Dorsolateral prefrontal cortex (tissue), 120 donors: ENCODE measurements at regions of chr15 and their contacts with region 1.

Region 1: DNA sequence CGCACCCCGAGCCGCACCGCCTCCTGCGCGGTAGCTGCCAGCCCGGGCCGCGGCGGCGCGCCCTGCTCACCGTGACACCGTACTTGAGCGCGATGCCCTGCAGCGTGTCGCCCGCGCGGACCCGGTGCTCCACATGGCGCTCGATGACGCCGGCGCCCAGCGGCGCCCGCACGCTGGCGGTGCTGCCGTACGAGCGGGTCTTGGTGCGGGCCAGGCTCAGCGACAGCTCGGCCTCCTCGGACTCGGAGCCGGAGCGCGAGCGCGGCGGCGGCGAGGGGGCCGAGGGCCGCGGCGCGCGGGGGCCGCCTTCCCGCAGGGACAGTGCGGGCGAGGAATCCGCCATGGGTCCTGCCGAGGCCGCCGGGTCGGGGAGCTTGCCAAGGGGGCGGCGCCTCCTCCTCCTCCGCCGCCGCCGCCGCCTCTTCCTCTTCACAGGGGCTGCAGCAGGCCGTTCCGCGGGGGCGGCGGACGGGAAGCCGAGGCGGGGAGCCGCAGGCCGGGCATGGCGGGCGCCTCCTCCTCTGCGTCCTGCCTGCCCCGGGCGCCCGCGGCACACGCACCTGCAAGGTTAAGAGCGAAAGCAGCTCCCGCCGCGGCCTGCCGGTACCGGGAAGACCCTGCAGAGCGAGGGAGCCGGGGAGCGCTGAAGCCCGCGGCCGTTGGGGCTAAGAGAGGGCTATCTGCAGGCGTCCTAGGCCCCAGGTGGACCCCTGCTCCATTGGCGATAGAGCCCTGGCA is at the start of gene LYSMD2:
- DNase-seq: peak; percentile 40 to 82 (median 63)
- H3K4me3 ChIP-seq: peak within 1 kb of the TSS; percentile 58 to 92 (median 81)
- H3K27ac ChIP-seq: peak within 1 kb of the TSS in 58 of 59 donors; percentile 77 to 99 (median 95)
- H3K27me3 ChIP-seq: no peaks in the 10 kb centered on the region
- CTCF ChIP-seq: peak in 2 of 56 donors; percentile 18 to 26
- total RNA-seq, gene LYSMD2: 9.8 to 63.1 (median 38.4) TPM

Region 2: DNA sequence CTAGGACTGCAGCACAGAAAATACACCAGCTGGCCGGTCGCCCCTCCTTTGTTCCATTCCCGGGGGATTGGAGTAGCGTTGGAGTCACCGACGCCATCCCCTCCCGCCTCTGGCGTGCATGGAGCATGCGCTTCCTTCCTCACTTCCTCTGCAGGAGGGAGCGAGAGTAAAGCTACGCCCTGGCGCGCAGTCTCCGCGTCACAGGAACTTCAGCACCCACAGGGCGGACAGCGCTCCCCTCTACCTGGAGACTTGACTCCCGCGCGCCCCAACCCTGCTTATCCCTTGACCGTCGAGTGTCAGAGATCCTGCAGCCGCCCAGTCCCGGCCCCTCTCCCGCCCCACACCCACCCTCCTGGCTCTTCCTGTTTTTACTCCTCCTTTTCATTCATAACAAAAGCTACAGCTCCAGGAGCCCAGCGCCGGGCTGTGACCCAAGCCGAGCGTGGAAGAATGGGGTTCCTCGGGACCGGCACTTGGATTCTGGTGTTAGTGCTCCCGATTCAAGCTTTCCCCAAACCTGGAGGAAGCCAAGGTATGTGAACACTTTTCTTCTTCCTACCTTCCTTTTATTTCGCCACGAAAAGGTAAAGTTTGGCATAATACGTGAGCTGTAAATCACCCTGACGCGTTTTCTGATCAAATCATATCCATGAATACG is 56.0 kb before region 1 on chr15 and contains the start of gene SCG3:
- intact Hi-C with region 1: no loop called
- DNase-seq: peak; percentile 65 to 92 (median 87)
- H3K4me3 ChIP-seq: peak within 1 kb of the TSS; percentile 13 to 75 (median 62)
- H3K27ac ChIP-seq: peak within 1 kb of the TSS in 58 of 59 donors; percentile 1 to 93 (median 82)
- H3K27me3 ChIP-seq: no peaks in the 10 kb centered on the region
- CTCF ChIP-seq: peak in 7 of 56 donors; percentile 10 to 28 (median 16)
- total RNA-seq, gene SCG3: 40.1 to 220 (median 136) TPM

Region 3: DNA sequence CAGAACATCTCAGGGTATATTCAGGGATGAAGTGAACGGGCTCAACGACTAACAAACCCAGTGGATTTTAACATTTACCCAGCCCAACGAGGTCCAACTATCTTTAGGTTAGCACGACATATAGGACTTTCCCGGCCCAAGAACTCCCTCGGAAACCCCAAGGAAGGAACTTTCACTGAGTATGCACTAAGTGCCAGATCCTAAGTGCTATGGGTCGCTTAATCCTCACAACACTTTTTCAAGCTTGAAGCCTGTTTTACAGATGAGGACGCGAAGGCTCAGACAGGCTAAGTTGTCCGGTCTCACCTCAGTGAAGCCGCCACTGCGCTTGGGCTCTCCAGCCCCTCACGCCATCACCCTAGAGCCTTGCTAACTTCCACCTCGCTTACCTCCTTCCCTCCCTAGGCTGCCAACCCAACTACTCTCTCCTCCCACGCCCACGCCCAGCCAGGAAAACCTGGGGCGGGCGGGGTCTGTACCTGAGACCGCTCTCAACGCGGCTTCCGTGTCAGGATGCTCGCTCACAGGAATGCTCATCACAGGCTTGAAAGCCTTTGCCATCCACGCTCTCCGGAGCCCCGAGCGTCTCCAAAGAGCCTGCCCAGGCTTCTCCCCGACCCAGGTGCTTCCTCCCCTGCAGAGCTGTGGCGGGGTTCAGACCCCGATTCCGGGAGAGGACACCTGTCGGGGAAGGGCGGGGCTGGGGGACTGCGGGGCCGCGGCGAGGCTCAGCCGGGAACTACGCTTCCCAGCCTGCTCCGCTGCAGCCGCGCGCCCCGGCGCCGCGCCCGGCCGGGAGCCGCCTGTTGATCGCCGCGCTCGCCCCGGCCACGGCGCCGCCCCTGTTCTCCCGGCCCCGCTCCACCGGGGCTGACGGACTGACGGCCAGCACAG is 13.6 kb after region 1 on chr15 and contains the start of gene TMOD2:
- intact Hi-C with region 1: loop called in 1 of 2 experiments (anchors 2 kb)
- DNase-seq: peak in 9 of 10 donors; percentile 43 to 82 (median 63)
- H3K4me3 ChIP-seq: peak within 1 kb of the TSS; percentile 55 to 93 (median 82)
- H3K27ac ChIP-seq: peak within 1 kb of the TSS in 57 of 59 donors; percentile 21 to 94 (median 85)
- H3K27me3 ChIP-seq: no peaks in the 10 kb centered on the region
- CTCF ChIP-seq: peak in 6 of 56 donors; percentile 7 to 34 (median 12)
- total RNA-seq, gene TMOD2: 156 to 398 (median 304) TPM

Region 4: DNA sequence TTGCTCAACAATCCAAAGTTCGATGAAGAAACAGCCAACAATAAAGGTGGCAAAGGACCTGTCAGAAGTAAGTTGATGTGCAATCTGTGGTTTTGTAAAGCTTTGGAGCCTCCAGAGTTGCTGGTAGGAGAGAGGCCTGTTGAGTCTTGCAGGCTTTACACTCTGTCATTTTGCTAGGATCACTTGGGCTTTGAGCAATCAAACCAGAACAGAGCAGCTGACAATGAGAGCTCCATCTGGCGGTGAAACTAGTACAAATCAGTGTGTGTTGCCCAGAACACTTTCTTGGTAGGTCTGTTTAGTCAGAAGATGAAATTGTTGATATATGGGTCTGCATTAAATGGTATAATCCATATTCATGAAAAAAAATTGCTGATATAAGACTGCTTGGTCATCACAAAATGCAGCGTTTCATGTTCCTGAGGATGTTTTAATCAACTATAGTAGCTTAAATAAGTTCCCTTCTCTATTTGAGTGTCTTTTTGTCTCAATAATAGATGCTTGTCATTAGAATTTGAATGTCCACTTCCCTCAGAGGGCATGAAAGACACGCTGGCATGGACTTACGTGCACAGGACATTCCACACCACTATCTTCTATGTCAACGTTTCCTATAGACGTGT is 39.6 kb after region 1 on chr15:
- intact Hi-C with region 1: loop called in 1 of 2 experiments (anchors 2 kb)
- DNase-seq: peak in 7 of 10 donors; percentile 59 to 84 (median 64)
- H3K4me3 ChIP-seq: no peak overlapping the region
- H3K27ac ChIP-seq: peak overlapping the region in 15 of 59 donors; percentile 3 to 76 (median 43)
- H3K27me3 ChIP-seq: no peaks in the 10 kb centered on the region
- CTCF ChIP-seq: peak; percentile 66 to 92 (median 86)

Region 5: GRCh38 chr15:51793521-51794305 is 56.3 kb after region 1 on chr15:
- intact Hi-C with region 1: no loop called
- DNase-seq: peak in 5 of 10 donors; percentile 16 to 56 (median 43)
- H3K4me3 ChIP-seq: no peak overlapping the region
- H3K27ac ChIP-seq: peak overlapping the region in 20 of 59 donors; percentile 13 to 62 (median 32)
- H3K27me3 ChIP-seq: no peaks in the 10 kb centered on the region
- CTCF ChIP-seq: no peak